Mucosa of descending colon (tissue), 3 donors: ENCODE measurements at regions of chr9 and their contacts with region 1.

Region 1: DNA sequence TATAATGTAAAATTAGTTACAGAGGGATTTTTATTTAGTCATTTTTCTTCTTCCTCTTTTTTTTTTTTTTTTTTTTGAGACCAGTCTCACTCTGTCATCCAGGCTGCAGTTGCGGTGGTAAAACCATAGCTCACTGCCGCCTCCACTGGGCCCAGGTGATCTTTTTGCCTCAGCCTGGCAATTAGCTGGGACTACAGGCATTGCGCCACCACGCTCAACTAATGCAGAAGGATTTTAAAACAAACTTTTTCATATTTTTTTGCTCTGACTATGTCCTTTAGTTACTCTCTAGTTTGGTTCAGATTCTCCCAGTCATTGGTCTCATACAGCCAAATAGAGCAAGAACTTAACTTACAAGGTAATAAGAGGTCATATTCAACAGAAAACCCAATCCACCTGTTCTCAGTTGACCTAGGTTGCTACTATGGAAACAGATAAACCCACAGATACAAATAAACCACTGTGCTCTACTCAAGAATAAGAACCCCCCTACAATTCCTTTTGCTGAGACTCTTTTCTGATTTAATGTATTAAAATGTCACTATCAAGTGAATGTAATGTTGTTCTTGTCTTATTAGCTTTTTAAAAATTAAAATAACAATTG is 50.1 kb upstream of the TTC39B start:
- DNase-seq: peak in 2 of 3 donors; percentile 79 to 81
- ATAC-seq: peak; percentile 97
- H3K4me3 ChIP-seq: no peak overlapping the region
- H3K4me1 ChIP-seq: peaks cover 9% of the 10 kb centered on the region
- CTCF ChIP-seq: no peak

Region 2: GRCh38 chr9:15277400-15278090 is 79.6 kb before region 1 on chr9:
- intact Hi-C with region 1: loop called in 1 of 2 experiments (anchors 10 kb)
- DNase-seq: no peak
- ATAC-seq: no peak
- H3K4me3 ChIP-seq: no peak overlapping the region
- H3K4me1 ChIP-seq: peaks cover 29% of the 10 kb centered on the region
- CTCF ChIP-seq: no peak